Prostate gland (tissue), 2 donors: ENCODE measurements at regions of chr18 and their contacts with region 1.

Region 1: GRCh38 chr18:48545757-48546321 is 7.0 kb downstream of the CTIF start:
- DNase-seq: peak; percentile 50
- H3K4me3 ChIP-seq: no peak overlapping the region
- H3K27ac ChIP-seq: peak overlapping the region in 1 of 2 donors; percentile 24
- H3K4me1 ChIP-seq: peaks cover 10% of the 10 kb centered on the region
- H3K27me3 ChIP-seq: no peaks in the 10 kb centered on the region
- CTCF ChIP-seq: no peak
- POLR2A ChIP-seq: no peak

Region 2: GRCh38 chr18:48613589-48614404 is 68.0 kb after region 1 on chr18:
- intact Hi-C with region 1: loop called (anchors 5 kb)
- DNase-seq: no peak
- H3K4me3 ChIP-seq: no peak overlapping the region
- H3K27ac ChIP-seq: no peak overlapping the region
- H3K4me1 ChIP-seq: no peaks in the 10 kb centered on the region
- H3K27me3 ChIP-seq: no peaks in the 10 kb centered on the region
- CTCF ChIP-seq: no peak
- POLR2A ChIP-seq: no peak